ENCODE measurements at regions of chr1 and their contacts with region 1.

Region 1: GRCh38 chr1:2545759-2546514 is 10.2 kb upstream of the TNFRSF14 start:
- DNase-seq: peak; percentile 91 to 92
- H3K4me3 ChIP-seq: peak overlapping the region in 1 of 3 donors; percentile 56
- H3K27ac ChIP-seq: peak overlapping the region; percentile 91 to 99 (median 95)
- H3K4me1 ChIP-seq: peaks cover 27 to 55% of the 10 kb centered on the region in 2 donors
- H3K27me3 ChIP-seq: peaks cover 2% of the 10 kb centered on the region
- CTCF ChIP-seq: no peak
- POLR2A ChIP-seq: peak in 1 of 2 donors; percentile 52

Region 2: GRCh38 chr1:2205191-2205952 is 340.6 kb before region 1 on chr1:
- intact Hi-C with region 1: loop called (anchors 10 kb)
- DNase-seq: peak; percentile 96
- H3K4me3 ChIP-seq: peak overlapping the region in 1 of 3 donors; percentile 46
- H3K27ac ChIP-seq: peak overlapping the region; percentile 71 to 87 (median 76)
- H3K4me1 ChIP-seq: peaks cover 25 to 59% of the 10 kb centered on the region in 2 donors
- H3K27me3 ChIP-seq: no peaks in the 10 kb centered on the region
- CTCF ChIP-seq: peak in 2 of 6 experiments; percentile 3 to 25
- POLR2A ChIP-seq: peak in 1 of 2 donors; percentile 69

Region 3: GRCh38 chr1:2227346-2228153 is 318.4 kb before region 1 on chr1:
- intact Hi-C with region 1: no loop called
- DNase-seq: peak; percentile 96 to 97
- H3K4me3 ChIP-seq: peak overlapping the region in 2 of 3 donors; percentile 75 to 85
- H3K27ac ChIP-seq: peak overlapping the region; percentile 96 to 99 (median 97)
- H3K4me1 ChIP-seq: peaks cover 33 to 37% of the 10 kb centered on the region in 2 donors
- H3K27me3 ChIP-seq: no peaks in the 10 kb centered on the region
- CTCF ChIP-seq: peak in 2 of 6 experiments; percentile 34 to 41
- POLR2A ChIP-seq: peak; percentile 83 to 92

Region 4: DNA sequence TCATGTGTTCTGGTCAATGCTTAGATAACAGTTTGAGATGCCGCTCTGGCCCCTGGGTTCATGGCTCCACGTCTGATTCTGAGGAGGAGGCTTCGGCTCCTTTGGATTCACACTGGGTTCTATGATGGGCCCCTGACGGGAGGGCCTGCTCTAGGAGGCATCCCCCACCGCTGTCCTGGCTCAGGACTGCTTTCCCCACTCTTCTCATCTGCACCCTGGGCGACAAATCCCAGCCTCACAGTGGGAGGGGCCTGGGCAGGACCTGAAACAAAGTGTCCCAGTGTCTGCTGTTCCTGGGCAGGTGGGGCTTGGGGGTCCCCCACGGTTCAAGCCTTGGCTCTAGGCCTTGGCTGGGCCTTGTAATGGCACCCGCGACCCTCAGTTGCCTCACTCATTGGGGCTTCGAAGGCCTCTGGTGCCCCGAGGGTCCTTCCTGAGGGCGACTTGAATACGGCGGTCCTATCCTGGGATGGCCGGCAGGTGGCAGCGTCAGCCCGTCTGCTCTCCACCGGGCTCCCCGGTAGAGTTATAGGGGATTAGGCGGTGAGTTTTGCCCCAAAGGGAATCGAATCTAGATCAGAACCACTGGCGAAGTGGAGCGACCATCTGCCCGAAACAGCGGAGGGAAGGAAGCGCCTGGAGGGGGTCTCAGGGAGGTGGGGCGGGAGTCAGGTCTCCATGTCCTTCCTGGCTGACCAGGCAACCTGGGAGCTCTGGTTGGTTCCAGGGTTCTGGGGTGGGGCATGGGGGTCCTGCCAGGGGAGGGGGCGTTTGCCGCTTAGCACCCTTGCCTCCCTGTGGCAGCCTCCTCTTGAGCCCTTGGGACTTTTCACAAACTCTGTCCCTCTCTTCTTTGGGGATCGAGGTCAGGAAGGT is 131.6 kb before region 1 on chr1:
- intact Hi-C with region 1: loop called (anchors 2 kb)
- DNase-seq: peak; percentile 68 to 74
- H3K4me3 ChIP-seq: no peak overlapping the region
- H3K27ac ChIP-seq: no peak overlapping the region
- H3K4me1 ChIP-seq: peaks cover 18 to 39% of the 10 kb centered on the region in 2 donors
- H3K27me3 ChIP-seq: no peaks in the 10 kb centered on the region
- CTCF ChIP-seq: peak; percentile 81 to 95 (median 92)
- POLR2A ChIP-seq: no peak

Region 5: GRCh38 chr1:2586154-2587070 is 40.5 kb after region 1 on chr1 and contains the start of gene PRXL2B:
- intact Hi-C with region 1: loop called (anchors 5 kb)
- DNase-seq: peak; percentile 100
- H3K4me3 ChIP-seq: peak within 1 kb of the TSS; percentile 40 to 84 (median 77)
- H3K27ac ChIP-seq: peak within 1 kb of the TSS; percentile 92 to 98 (median 98)
- H3K4me1 ChIP-seq: peaks cover 25 to 35% of the 10 kb centered on the region in 2 donors
- H3K27me3 ChIP-seq: no peaks in the 10 kb centered on the region
- CTCF ChIP-seq: no peak
- POLR2A ChIP-seq: peak; percentile 64 to 96
- total RNA-seq, gene PRXL2B: 14.6 to 24.7 (median 18.0) TPM